ENCODE measurements at regions of chr10 and their contacts with region 1.

Region 1: DNA sequence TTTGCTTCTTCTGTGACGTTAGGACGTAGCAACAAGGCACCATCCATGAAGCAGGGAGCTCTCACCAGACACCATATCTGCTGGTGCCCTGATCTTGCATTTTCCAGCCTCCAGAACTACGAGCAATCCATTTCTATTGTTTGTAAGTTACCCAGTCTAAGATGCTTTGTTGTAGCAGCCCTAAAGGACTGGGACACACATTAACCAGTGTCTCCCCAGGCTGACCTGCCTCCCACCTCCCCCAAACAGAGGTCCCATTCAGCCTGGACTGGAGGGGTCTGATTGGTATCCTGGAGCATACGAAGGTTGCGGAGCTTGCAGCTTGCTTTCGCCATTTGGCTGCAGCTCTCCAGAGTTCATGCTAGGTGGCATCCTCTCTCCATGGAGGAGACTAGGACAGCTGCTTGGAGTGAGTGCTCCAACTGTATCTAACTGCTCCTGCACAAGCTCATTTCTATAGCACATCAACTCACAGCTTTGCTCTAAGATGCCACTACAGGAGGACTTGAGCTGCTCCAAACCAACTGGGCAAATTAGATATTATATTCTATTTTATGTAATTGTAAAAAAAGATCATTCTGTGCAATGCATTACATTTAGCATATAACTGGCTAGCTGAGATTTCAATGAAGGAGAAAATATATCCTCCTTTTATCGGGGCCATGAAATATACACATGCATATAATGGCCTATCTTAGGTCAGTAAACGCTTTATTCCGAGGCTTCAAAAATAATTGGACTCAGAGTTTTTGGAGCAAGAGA is 8.0 kb upstream of the GRK5 start:
- DNase-seq: peak; percentile 88
- ATAC-seq: peak; percentile 96
- H3K4me3 ChIP-seq: peak overlapping the region; percentile 27 to 62 (median 36); a peak in 5 of 6 replicates
- H3K27ac ChIP-seq: no peak overlapping the region
- H3K4me1 ChIP-seq: peaks cover 61% of the 10 kb centered on the region
- H3K27me3 ChIP-seq: no peaks in the 10 kb centered on the region
- CTCF ChIP-seq: peak; percentile 96
- EP300 ChIP-seq: no peak
- POLR2A ChIP-seq: no peak
- RAD21 ChIP-seq: peak; percentile 94

Region 2: GRCh38 chr10:119165171-119166110 is 34.0 kb before region 1 on chr10 and contains the start of gene SFXN4:
- CTCF ChIA-PET with region 1: no interaction called
- POLR2A ChIA-PET with region 1: interaction called, 12 read pairs
- in situ Hi-C with region 1: no loop called
- intact Hi-C with region 1: no loop called
- DNase-seq: peak; percentile 63
- ATAC-seq: peak; percentile 90
- H3K4me3 ChIP-seq: peak within 1 kb of the TSS; percentile 75 to 81 (median 76)
- H3K27ac ChIP-seq: peak within 1 kb of the TSS; percentile 91
- H3K4me1 ChIP-seq: peaks cover 26% of the 10 kb centered on the region
- H3K27me3 ChIP-seq: no peaks in the 10 kb centered on the region
- CTCF ChIP-seq: peak; percentile 64
- EP300 ChIP-seq: no peak
- POLR2A ChIP-seq: peak; percentile 60 to 77
- RAD21 ChIP-seq: peak; percentile 50; the same call in 1 of the 2 replicates
- total RNA-seq, gene SFXN4: 47.4 and 64.9 TPM in 2 replicates

Region 3: DNA sequence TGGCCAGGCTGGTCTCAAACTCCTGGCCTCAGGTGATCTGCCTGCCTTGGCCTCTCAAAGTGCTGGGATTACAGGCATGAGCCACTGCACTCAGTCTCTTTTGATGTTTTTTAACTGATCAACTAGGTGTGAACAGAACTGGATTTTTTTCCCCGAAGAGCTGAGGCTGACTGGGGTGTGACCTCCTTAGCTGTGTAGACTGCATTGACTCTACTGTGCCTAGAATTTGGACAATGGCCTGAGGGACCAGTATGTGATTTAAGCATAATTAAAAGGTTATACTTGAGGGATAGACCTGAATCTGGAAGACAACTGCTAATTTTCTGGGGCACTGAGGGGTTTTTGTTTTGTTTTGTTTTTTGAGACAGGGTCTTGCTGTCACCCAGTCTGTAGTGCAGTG is 14.8 kb after region 1 on chr10:
- CTCF ChIA-PET with region 1: no interaction called
- POLR2A ChIA-PET with region 1: no interaction called
- in situ Hi-C with region 1: no loop called
- intact Hi-C with region 1: no loop called
- DNase-seq: no peak
- ATAC-seq: no peak
- H3K4me3 ChIP-seq: no peak overlapping the region
- H3K27ac ChIP-seq: no peak overlapping the region
- H3K4me1 ChIP-seq: peaks cover 57% of the 10 kb centered on the region
- H3K27me3 ChIP-seq: no peaks in the 10 kb centered on the region
- CTCF ChIP-seq: no peak
- EP300 ChIP-seq: no peak
- POLR2A ChIP-seq: no peak
- RAD21 ChIP-seq: no peak

Region 4: DNA sequence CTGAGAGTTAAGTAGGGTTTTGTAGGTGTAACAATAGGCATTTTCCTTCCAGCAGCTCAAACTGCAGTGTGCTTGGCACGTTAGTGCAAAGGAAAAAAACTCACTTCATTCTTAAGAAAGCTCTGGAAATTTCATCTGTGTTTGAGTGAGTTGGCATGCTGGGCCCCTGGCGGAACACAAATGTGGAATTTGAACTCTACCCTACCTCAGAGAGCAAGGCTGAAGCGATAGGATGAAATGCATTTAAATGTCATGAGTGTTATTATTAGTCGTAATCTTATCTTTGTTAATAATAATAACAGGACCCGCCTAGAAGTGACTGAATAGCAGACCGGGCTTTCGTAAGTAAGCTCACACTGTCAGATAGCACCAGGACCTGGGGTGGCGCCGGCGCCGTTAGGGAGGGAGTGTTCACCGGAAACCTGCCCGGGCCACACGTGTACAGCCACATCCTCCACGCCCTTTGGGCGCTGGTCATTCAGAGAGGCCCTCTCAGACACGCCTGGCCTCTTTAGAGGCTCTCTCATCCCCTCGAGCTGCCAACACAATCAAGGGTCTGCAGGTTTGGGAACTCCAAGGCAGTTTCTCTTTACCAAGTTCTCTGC is 71.5 kb after region 1 on chr10:
- CTCF ChIA-PET with region 1: no interaction called
- POLR2A ChIA-PET with region 1: interaction called, 13 read pairs
- in situ Hi-C with region 1: no loop called
- intact Hi-C with region 1: no loop called
- DNase-seq: peak; percentile 75
- ATAC-seq: peak; percentile 89
- H3K4me3 ChIP-seq: peak overlapping the region; percentile 12 to 52 (median 34); a peak in 5 of 6 replicates
- H3K27ac ChIP-seq: peak overlapping the region; percentile 83
- H3K4me1 ChIP-seq: peaks cover 63% of the 10 kb centered on the region
- H3K27me3 ChIP-seq: no peaks in the 10 kb centered on the region
- CTCF ChIP-seq: no peak; the same call in 1 of the 2 replicates
- EP300 ChIP-seq: no peak; a peak in 1 of 4 replicates
- POLR2A ChIP-seq: peak; percentile 51 to 54; a peak in 3 of 4 replicates
- RAD21 ChIP-seq: no peak; the same call in 1 of the 2 replicates

Region 5: DNA sequence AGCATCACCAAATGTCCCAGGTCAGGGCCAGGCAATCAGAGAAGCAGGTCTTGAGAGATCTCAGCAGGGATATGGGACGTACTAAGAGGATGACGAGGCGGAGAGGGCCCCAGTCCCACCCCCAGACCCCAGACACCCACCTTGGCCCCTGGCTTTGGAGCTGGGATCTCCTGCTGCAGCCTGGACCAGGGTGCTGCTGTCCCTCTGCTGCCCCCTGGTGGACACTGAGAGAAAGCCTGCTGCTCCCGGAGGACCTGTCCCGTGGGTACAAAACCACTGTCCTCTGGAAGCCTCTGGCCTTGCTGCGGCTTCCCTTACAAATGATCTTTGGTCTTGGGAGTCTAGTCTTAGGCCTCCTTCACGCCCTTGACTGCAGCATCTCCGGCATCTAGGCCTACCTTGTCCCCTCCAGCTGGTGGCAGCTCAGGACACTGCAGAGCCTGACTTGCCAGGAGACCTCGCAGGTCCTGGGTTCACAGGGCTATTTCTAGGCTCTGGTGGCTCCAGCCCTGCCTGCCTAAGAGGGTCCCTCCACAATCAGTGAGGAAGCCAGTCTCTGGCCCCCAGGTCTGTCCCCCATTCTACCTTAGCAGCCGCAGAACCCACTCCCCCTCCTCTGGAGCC is 246.0 kb after region 1 on chr10:
- CTCF ChIA-PET with region 1: interaction called, 19 read pairs
- POLR2A ChIA-PET with region 1: interaction called, 3 read pairs
- in situ Hi-C with region 1: loop called (anchors 10 kb)
- intact Hi-C with region 1: loop called (anchors 1 kb)
- DNase-seq: peak; percentile 65
- ATAC-seq: peak; percentile 85
- H3K4me3 ChIP-seq: no peak overlapping the region
- H3K27ac ChIP-seq: no peak overlapping the region
- H3K4me1 ChIP-seq: no peaks in the 10 kb centered on the region
- H3K27me3 ChIP-seq: no peaks in the 10 kb centered on the region
- CTCF ChIP-seq: peak; percentile 92
- EP300 ChIP-seq: no peak
- POLR2A ChIP-seq: no peak
- RAD21 ChIP-seq: peak; percentile 77

Measured in HepG2 (cell line).